ENCODE measurements at regions of chr19 and their contacts with region 1.

Region 1: GRCh38 chr19:10960314-10961072 is at the start of gene SMARCA4:
- DNase-seq: peak; percentile 98
- H3K4me3 Mint-ChIP-seq: peak within 1 kb of the TSS; percentile 89
- H3K27ac Mint-ChIP-seq: peak within 1 kb of the TSS; percentile 86
- H3K4me1 Mint-ChIP-seq: peaks cover 44% of the 10 kb centered on the region
- H3K27me3 Mint-ChIP-seq: no peaks in the 10 kb centered on the region
- total RNA-seq, gene SMARCA4: 97.8 to 101 TPM

Region 2: DNA sequence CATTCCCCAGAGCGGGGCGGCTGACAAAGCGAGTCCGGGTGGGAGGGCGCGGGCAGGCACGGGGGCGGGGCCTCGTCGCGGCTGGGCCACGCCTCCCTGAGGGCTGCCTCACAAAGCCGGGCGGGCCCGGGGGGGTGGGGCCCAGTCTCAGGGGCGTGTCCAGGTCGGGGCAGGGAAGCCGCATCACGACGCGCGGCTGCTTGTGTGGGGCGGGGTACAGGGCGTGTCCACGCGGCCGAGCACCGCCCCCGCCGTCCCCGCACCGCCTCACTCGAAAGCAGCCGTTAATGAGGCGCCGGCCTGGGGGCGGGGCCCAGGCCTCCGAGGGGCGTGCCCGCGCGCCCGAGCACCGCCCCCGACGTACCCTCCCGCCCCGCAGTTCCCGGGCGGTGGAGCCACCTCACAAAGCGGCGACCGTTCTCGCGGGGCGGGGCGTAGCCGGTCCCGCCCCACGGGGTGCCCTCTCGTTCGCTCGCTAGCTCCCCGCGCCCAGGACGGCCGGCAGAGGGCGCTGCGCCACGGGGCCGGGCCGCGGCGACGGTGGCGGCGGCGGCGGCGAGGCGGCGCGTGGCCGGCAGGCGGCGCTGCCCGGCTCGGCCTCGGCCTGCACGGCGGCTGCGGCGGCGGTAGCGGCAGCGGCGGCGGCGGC is 89.4 kb before region 1 on chr19 and contains the start of gene CARM1:
- CTCF ChIA-PET with region 1: interaction called, 4 read pairs
- POLR2A ChIA-PET with region 1: no interaction called
- intact Hi-C with region 1: loop called (anchors 2 kb)
- DNase-seq: peak; percentile 99
- H3K4me3 Mint-ChIP-seq: peak within 1 kb of the TSS; percentile 79
- H3K27ac Mint-ChIP-seq: peak within 1 kb of the TSS; percentile 96
- H3K4me1 Mint-ChIP-seq: peaks cover 25% of the 10 kb centered on the region
- H3K27me3 Mint-ChIP-seq: no peaks in the 10 kb centered on the region
- total RNA-seq, gene CARM1: 75.0 to 78.3 TPM

Region 3: DNA sequence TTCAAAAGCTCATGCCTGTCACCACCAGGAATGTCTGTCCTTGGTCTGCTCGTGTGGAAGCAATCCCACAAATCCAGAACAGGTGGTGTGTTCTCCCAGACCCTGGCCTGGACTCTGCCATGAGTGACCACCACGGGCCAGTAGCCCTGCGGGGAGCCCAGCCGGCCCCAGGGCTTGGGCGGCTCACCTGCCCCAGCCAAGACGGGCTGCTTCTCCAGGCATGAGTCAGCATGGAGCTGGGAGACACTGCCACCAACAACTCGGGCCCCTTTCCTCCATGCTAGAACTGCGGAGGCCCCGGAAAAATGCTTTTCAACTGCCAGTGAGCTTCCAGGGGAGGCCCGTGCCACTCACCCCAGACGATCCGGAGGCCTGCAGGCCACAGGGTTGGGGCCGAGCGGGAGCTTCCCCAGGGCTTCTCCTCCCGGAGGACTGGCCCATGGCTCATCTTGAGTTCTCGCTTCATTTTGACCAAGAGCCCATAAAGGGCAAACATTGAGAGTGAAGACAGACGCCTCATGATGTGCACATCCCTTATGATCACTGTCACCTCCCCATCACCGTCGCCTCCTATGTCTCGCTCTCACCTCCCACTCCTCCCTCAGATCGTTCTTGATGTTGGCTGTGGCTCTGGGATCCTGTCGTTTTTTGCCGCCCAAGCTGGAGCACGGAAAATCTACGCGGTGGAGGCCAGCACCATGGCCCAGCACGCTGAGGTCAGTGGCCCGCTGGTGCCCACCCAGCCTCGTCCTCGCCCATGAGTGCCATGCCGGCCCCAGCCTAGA is 48.7 kb before region 1 on chr19:
- CTCF ChIA-PET with region 1: no interaction called
- POLR2A ChIA-PET with region 1: no interaction called
- intact Hi-C with region 1: no loop called
- DNase-seq: no peak
- H3K4me3 Mint-ChIP-seq: no peak overlapping the region
- H3K27ac Mint-ChIP-seq: no peak overlapping the region
- H3K4me1 Mint-ChIP-seq: no peaks in the 10 kb centered on the region
- H3K27me3 Mint-ChIP-seq: no peaks in the 10 kb centered on the region

Region 4: DNA sequence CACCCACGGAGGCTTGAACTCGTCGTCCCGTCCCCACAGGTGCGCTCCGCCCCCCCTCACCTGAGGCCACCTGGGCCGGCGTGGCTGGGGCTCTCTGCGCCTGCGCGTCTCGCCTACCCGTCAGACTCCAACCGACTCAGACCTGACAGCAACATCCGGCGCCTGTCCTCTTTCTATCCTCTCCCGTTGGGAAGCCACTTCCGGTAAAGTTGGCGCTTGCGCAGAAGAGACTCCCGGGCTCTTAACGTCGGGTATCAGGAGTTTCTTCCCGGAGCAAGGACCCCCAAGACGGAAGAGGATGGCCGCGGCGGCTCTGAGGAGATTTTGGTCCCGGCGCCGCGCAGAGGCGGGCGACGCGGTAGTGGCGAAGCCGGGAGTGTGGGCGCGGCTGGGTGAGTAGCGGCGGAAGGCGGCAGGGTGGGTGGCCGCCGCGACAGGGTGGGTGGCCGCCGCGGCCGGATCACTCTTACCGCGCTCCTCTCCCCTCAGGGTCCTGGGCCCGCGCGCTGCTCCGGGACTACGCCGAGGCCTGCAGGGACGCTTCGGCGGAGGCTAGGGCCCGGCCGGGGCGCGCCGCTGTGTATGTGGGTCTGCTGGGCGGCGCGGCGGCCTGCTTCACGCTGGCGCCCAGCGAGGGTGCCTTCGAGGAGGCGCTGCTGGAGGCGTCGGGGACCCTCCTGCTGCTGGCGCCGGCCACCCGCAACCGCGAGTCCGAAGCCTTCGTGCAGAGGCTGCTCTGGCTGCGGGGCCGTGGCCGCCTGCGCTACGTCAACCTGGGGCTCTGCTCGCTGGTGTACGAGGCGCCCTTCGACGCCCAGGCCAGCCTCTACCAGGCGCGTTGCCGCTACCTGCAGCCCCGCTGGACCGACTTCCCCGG is 31.7 kb before region 1 on chr19 and contains the starts of genes TIMM29 and YIPF2:
- CTCF ChIA-PET with region 1: no interaction called
- POLR2A ChIA-PET with region 1: no interaction called
- intact Hi-C with region 1: loop called (anchors 1 kb)
- DNase-seq: peak; percentile 97
- H3K4me3 Mint-ChIP-seq: peak within 1 kb of the TSS; percentile 92
- H3K27ac Mint-ChIP-seq: peak within 1 kb of the TSS; percentile 81
- H3K4me1 Mint-ChIP-seq: peaks cover 21% of the 10 kb centered on the region
- H3K27me3 Mint-ChIP-seq: no peaks in the 10 kb centered on the region
- total RNA-seq, gene TIMM29: 15.6 to 16.4 TPM
- total RNA-seq, gene YIPF2: 25.6 to 28.4 TPM

Region 5: GRCh38 chr19:10946964-10947657 is 13.4 kb before region 1 on chr19:
- CTCF ChIA-PET with region 1: interaction called, 13 read pairs
- POLR2A ChIA-PET with region 1: interaction called, 5 read pairs
- intact Hi-C with region 1: loop called (anchors 2 kb)
- DNase-seq: no peak
- H3K4me3 Mint-ChIP-seq: no peak overlapping the region
- H3K27ac Mint-ChIP-seq: no peak overlapping the region
- H3K4me1 Mint-ChIP-seq: no peaks in the 10 kb centered on the region
- H3K27me3 Mint-ChIP-seq: no peaks in the 10 kb centered on the region

Region 6: DNA sequence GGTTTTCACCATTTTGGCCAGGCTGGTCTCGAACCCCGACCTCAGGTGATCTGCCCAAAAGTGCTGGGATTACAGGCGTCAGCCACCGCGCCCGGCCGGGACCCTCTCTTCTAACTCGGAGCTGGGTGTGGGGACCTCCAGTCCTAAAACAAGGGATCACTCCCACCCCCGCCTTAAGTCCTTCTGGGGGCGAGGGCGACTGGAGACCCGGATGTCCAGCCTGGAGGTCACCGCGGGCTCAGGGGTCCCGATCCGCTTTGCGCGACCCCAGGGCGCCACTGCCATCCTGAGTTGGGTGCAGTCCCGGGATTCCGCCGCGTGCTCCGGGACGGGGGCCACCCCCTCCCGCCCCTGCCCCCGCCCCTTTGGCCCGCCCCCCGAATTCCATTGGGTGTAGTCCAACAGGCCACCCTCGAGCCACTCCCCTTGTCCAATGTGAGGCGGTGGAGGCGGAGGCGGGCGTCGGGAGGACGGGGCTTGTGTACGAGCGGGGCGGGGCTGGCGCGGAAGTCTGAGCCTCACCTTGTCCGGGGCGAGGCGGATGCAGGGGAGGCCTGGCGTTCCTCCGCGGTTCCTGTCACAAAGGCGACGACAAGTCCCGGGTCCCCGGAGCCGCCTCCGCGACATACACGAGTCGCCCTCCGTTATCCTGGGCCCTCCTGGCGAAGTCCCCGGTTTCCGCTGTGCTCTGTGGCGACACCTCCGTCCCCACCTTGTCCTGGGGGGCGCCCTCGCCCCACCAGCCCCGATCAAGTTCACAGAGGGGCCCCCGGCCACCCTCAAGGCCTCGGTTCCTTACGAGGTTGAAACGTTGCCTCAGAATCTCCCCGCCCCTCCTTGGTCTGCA is 129.8 kb after region 1 on chr19:
- CTCF ChIA-PET with region 1: no interaction called
- POLR2A ChIA-PET with region 1: interaction called, 6 read pairs
- intact Hi-C with region 1: loop called (anchors 2 kb)
- DNase-seq: peak; percentile 99
- H3K4me3 Mint-ChIP-seq: peak overlapping the region; percentile 95
- H3K27ac Mint-ChIP-seq: peak overlapping the region; percentile 98
- H3K4me1 Mint-ChIP-seq: peaks cover 45% of the 10 kb centered on the region
- H3K27me3 Mint-ChIP-seq: no peaks in the 10 kb centered on the region